Cardiac septum (tissue), 1 donor: ENCODE measurements at regions of chr1 and their contacts with region 1.

Region 1: DNA sequence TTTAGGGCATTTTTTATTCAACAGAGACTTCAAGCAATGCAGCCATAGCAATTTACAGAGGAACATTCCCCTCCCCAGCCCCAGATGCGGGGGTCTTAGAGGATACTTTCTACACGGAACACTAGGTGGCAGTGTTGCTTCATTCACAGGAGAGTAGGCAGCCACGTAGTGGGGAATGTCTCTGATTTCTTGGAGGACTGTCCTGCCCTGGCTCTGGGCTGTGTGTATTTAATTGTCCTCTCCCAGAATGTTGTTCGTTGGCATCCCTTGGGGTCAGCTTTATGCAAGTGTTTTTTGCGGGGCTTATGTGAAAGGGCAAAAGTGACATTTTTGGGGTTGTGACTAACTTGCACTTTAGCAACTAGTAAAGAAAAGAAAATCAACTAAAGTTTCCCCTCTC is 96.9 kb downstream of the PAPPA2 start:
- DNase-seq: no peak

Region 2: DNA sequence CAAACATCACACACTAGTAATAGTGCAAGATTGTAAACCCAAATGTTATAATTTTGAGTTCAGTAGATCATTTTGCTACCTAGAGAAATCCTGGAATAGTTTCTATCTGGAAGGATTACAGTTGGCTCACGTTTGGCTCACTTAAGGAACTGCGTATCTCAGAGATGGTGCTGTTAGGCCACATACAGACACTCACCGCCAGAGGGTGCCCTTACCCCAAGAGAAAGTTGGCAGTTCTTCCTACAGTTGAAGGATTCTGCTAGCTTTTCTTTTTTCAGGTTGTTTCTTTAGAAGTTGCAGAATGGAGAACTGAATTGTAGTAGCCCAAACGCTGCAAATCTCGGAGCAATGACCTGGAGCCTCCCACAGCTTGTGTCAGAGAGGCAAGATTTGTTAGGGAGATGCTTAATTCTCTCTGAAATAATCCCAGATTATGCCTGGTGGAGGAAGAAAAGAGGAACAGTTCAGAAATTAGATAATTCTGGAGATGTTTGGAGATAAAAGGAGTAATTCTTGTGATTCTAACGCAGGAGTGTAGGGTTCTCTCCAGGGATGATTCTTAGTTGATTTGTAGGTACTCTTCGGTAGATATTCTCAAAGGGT is 184.8 kb before region 1 on chr1:
- intact Hi-C with region 1: loop called (anchors 5 kb)
- DNase-seq: peak; percentile 77

Region 3: GRCh38 chr1:176444286-176444685 is 115.6 kb before region 1 on chr1:
- intact Hi-C with region 1: no loop called
- DNase-seq: no peak

Region 4: GRCh38 chr1:176656257-176656995 is 96.5 kb after region 1 on chr1:
- intact Hi-C with region 1: loop called (anchors 5 kb)
- DNase-seq: no peak

Region 5: DNA sequence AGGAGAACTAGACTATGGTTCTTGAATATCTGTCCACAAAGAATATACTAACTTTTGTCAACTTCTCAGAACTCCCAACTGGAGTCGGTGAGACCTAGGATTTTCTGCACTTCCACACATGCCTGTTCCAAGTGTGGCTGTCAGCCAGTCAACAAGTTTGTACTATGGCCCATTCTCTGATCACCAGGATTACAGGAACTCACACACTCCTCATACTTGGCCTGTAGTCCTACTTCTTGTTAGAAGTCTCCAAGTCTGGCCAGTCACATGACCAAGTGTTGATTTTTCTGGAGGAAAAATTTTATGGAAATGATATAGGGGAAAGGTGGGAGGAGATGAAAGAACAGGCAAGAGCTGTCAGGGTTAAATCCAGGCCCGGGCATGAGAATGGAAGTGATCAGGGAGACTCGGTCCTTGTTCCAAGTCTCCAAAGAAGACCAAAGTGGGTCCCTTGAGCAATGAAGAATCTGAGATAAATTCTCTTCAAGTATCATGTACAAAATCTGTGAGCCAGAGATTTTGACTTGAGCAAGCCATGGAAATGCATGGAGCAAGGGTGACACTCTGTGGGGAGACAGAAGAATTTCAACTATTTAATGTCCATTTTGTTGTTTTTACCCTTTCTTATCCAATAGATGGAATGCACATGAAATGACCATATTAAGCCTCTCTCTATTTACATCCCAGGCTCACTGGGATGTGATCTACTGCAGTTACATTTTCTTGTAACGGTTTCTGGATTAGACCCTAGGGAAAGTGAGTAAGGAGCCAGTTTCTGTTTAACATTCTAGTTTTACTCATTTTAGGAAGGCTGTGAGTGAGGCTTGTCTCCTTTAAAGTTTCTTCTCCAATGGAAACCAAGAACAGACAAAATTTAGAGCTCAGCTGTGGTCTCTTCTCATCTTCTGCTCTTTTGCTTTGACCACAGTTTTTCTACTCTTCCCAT is 283.7 kb after region 1 on chr1:
- intact Hi-C with region 1: loop called (anchors 2 kb)
- DNase-seq: no peak

Region 6: DNA sequence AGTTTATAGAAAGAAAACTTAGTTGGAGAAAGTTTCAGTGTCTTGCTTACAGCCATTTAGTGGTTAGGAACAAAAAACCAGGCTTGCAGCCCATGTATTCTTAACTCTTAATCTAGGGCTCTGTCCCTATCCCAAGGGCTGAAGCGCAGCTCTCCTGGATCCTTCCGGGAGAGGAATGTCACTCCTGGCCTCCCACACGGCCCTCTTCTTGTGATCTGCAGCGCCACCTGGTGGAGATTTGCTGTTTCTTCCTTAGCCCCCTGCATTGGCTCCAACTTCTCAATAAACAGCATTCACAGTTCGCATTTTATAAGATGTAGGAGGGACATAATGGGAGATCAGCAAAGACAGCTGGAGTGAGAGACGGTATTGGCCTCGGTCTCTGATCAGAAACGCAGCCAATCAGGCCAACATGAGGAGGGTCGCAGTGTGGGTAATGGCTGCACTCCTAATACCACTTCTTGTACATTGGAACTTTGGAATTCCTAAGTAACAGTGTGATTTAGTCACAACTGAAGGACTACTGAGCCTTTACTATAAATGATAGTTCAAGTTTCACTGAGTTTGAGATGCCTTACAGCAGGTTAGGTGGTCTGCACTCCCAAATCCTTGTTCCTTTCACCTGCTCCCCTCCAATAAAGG is 321.2 kb after region 1 on chr1:
- intact Hi-C with region 1: loop called (anchors 2 kb)
- DNase-seq: no peak